ENCODE measurements at regions of chr20 and their contacts with region 1.

Region 1: DNA sequence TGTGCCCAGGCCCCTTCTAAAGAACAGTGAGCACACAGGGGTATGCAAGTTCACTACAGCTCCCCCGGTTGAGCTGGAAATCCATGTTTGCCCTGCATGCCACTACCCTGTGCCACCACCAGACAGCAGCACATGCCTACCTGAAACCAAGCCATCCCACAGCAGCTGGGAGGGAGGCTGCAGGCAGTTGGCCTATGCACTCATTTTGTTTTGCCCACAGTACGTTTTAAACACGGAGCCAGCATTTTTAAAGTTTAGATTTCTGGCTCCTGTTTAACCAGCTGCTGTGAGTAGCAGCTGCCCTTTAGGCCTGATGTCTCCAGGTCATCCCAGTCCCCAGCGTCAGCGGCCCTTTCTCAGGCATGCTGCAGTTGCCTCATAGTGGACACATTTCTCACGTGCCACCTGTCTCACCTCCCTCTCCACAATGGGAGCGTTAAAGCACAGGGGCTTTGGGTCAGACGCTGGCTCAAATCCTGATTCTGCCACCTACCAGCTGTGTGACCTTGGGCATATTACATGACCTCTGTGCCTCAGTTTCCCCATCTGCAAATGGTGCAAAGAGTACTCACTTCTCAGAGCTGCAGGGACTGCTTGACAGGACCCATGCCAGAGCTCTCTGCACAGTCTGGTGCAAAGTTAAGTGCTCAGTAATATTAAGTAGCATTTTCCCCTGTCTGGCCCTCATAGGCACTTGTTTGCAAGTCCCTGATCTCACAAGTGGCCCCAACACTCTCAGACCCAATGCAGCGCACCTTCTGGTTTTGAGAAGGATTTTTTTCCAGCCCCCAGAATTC is 8.1 kb upstream of the UBE2V1 start:
- DNase-seq: peak; percentile 48 to 85 (median 62)
- ATAC-seq: peak; percentile 83
- H3K4me3 ChIP-seq: no peak overlapping the region
- H3K4me3 Mint-ChIP-seq: no peak overlapping the region
- H3K27ac ChIP-seq: no peak overlapping the region
- H3K27ac Mint-ChIP-seq: peak overlapping the region; percentile 17
- H3K4me1 ChIP-seq: peaks cover 9% of the 10 kb centered on the region
- H3K4me1 Mint-ChIP-seq: peaks cover 12% of the 10 kb centered on the region
- H3K27me3 ChIP-seq: no peaks in the 10 kb centered on the region
- H3K27me3 Mint-ChIP-seq: no peaks in the 10 kb centered on the region
- CTCF ChIP-seq: peak; percentile 74

Region 2: GRCh38 chr20:50133474-50134217 is 12.6 kb after region 1 on chr20:
- CTCF ChIA-PET with region 1: interaction called, 10 read pairs
- POLR2A ChIA-PET with region 1: no interaction called
- intact Hi-C with region 1: no loop called
- DNase-seq: peak in 1 of 14 experiments; percentile 8
- ATAC-seq: peak; percentile 34
- H3K4me3 ChIP-seq: no peak overlapping the region
- H3K4me3 Mint-ChIP-seq: no peak overlapping the region
- H3K27ac ChIP-seq: no peak overlapping the region
- H3K27ac Mint-ChIP-seq: no peak overlapping the region
- H3K4me1 ChIP-seq: no peaks in the 10 kb centered on the region
- H3K4me1 Mint-ChIP-seq: no peaks in the 10 kb centered on the region
- H3K27me3 ChIP-seq: no peaks in the 10 kb centered on the region
- H3K27me3 Mint-ChIP-seq: no peaks in the 10 kb centered on the region
- CTCF ChIP-seq: no peak

Region 3: DNA sequence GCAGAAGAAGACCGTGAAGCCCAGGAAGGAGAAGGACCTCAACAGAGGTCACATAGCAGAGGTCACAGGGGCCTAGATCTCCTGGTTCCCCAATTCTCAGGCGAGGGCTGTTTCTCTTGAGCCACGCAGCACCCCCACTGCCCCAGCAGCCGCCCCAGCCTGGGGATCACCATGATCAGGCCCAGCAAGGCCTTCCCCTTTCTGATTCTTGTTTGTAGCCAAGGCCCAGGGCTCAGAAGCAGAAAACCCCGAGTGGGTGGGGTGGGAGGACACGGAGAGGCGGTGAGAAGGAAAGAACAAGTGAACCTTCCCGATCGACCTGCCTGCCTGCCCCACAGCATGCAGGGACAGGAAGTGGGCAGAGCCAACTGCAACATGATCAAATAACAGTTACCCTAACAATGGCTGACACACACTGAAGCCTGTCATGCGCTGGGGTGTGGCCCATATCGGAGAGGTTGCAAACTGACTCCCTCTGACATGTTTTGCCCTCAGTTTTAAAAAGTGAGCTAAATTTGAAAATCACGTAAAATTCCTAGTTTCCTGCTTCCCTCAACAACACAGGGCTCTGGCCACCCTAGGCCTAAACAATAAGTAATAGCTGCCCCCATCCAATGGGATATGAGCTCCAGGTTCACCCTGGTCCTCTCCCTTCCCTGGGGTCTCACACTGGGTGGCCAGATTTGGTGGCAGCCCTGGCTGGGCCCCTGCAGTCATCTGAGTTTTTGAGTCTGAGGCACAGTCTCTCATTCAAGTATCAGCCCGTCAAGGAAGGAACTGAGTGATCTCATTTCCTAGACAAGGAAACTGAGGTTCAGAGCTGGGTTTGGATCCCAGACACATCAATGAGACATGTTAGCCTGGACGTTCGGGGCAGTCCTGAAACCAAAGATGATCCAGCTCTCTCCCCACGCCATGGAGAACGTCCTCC is 25.9 kb after region 1 on chr20:
- CTCF ChIA-PET with region 1: interaction called, 36 read pairs
- POLR2A ChIA-PET with region 1: interaction called, 47 read pairs
- intact Hi-C with region 1: no loop called
- DNase-seq: peak; percentile 63 to 93 (median 75)
- ATAC-seq: peak; percentile 99
- H3K4me3 ChIP-seq: peak overlapping the region; percentile 45
- H3K4me3 Mint-ChIP-seq: peak overlapping the region; percentile 85
- H3K27ac ChIP-seq: peak overlapping the region; percentile 93
- H3K27ac Mint-ChIP-seq: peak overlapping the region; percentile 99
- H3K4me1 ChIP-seq: peaks cover 78% of the 10 kb centered on the region
- H3K4me1 Mint-ChIP-seq: peaks cover 70% of the 10 kb centered on the region
- H3K27me3 ChIP-seq: no peaks in the 10 kb centered on the region
- H3K27me3 Mint-ChIP-seq: no peaks in the 10 kb centered on the region
- CTCF ChIP-seq: no peak

Region 4: GRCh38 chr20:50179507-50180016 is 58.5 kb after region 1 on chr20:
- CTCF ChIA-PET with region 1: interaction called, 62 read pairs
- POLR2A ChIA-PET with region 1: interaction called, 6 read pairs
- intact Hi-C with region 1: loop called in 1 of 2 experiments (anchors 1 kb)
- DNase-seq: no peak
- ATAC-seq: no peak
- H3K4me3 ChIP-seq: no peak overlapping the region
- H3K4me3 Mint-ChIP-seq: no peak overlapping the region
- H3K27ac ChIP-seq: no peak overlapping the region
- H3K27ac Mint-ChIP-seq: no peak overlapping the region
- H3K4me1 ChIP-seq: no peaks in the 10 kb centered on the region
- H3K4me1 Mint-ChIP-seq: no peaks in the 10 kb centered on the region
- H3K27me3 ChIP-seq: peaks cover 0 to 3% of the 10 kb centered on the region in 2 experiments
- H3K27me3 Mint-ChIP-seq: peaks cover 4% of the 10 kb centered on the region
- CTCF ChIP-seq: peak; percentile 39

Measured in CD4-positive, alpha-beta T cell (primary cell).